OCI-LY7 (cell line): ENCODE measurements at regions of chr2 and their contacts with region 1.

Region 1: GRCh38 chr2:37414470-37414949 is 70.1 kb downstream of the QPCT start:
- DNase-seq: peak; percentile 70
- H3K4me3 ChIP-seq: no peak overlapping the region
- H3K27ac ChIP-seq: no peak overlapping the region
- H3K4me1 ChIP-seq: no peaks in the 10 kb centered on the region
- CTCF ChIP-seq: peak; percentile 89

Region 2: DNA sequence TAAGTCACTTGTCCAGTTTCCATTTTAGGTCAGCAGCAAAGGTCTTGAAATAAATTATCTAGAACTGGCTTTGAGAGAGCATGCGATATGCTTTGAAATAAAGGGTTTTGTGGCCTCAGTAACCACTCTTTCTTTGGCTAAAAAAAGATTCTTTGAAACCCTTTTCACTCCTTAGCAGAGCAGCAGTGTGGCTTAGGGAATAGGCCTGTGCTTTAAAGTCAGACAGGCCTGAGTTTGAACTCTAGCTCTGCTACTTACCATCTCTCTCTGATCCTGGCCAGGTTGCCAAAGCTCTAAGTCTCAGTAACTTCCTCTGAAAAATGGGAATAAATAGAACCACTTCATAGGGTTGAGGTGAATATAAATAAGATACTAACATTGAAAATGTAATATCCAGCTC is 17.3 kb before region 1 on chr2:
- CTCF ChIA-PET with region 1: interaction called, 16 read pairs
- POLR2A ChIA-PET with region 1: interaction called, 8 read pairs
- intact Hi-C with region 1: no loop called
- DNase-seq: no peak
- H3K4me3 ChIP-seq: no peak overlapping the region
- H3K27ac ChIP-seq: no peak overlapping the region
- H3K4me1 ChIP-seq: peaks cover 41% of the 10 kb centered on the region
- CTCF ChIP-seq: no peak

Region 3: DNA sequence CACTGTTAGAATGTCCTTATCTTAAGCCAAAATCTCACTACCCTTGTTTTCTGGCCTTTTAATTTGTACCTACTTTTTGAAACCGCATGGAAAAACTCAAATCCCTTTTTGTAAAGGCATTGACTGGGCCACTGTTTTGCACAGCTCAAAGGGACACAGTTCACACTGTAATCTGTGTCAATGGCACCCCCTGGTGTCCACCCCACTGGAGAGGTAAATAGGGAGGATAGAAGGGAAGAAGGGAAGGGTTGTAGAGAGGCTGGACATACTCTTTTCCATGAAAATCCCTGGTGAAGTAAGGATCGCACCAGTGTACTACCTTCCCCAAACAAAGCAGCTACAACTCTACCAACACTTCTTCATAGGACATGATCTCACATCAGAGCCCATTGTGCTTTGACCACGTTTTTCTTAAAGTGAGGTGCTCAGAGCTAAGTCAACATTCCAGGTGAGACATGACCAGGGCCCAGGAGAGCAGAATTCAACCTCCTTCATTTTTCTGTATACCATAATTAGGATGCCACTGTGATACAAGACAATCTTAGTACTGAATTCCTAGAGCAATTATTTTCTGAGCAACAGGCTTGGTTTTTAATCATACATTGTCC is 418.2 kb after region 1 on chr2:
- CTCF ChIA-PET with region 1: interaction called, 3 read pairs
- POLR2A ChIA-PET with region 1: no interaction called
- intact Hi-C with region 1: loop called (anchors 1 kb)
- DNase-seq: peak; percentile 75
- H3K4me3 ChIP-seq: no peak overlapping the region
- H3K27ac ChIP-seq: no peak overlapping the region
- H3K4me1 ChIP-seq: no peaks in the 10 kb centered on the region
- CTCF ChIP-seq: peak; percentile 90